Activated CD4-positive, alpha-beta T cell treated with anti-CD3 and anti-CD28 coated beads, Interleukin-2, amount 10 ng/mL, durations not matched to agents 7 days and 5 days (primary cell): ENCODE measurements at regions of chr10 and their contacts with region 1.

Region 1: DNA sequence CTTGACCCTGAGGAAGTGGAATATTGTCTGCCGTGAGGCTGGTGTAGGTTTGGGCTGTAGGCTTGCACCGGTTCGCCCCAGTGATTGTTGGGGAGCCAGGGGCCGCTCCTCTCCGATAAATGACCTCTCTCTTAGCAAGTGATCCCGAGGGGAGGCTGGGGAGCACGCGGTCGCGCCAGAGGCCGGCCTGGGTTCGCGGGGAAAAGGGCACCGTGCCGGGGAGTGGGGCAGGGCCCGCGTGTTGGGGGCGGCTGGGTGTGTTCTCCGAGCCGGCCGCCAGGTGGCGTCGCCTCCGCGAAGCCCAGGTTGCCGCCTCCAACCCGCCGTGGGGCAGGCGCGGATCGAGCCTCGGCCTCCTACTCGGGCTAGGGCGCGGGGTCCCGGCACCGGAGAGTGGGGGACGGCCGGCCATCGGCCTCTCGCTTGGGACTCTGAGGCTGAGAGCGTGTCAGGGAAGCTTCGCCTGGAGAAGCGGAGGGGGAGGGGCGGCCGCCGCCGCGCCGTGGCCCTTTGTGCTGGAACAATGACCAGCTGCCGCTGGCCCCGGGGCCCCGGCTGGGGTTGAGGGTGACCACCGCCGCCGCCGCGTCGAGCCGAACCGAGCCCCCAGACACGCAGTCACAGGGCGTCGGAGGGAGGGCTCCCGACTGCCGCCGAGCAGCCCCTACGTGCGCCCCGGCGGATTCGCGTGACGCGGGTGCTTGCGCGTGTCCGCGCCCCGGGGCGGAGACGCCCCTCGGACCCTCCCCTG is 442 bp upstream of the LZTS2 start:
- DNase-seq: peak; percentile 73
- H3K4me3 Mint-ChIP-seq: peak overlapping the region; percentile 80
- H3K27ac Mint-ChIP-seq: peak overlapping the region; percentile 88
- H3K4me1 Mint-ChIP-seq: peaks cover 27% of the 10 kb centered on the region
- H3K27me3 Mint-ChIP-seq: peaks cover 2% of the 10 kb centered on the region

Region 2: GRCh38 chr10:100986952-100987750 is 12.0 kb before region 1 on chr10 and contains the starts of genes MRPL43 and TWNK:
- CTCF ChIA-PET with region 1: interaction called, 14 read pairs
- POLR2A ChIA-PET with region 1: no interaction called
- DNase-seq: peak; percentile 90
- H3K4me3 Mint-ChIP-seq: peak within 1 kb of the TSS; percentile 89
- H3K27ac Mint-ChIP-seq: peak within 1 kb of the TSS; percentile 83
- H3K4me1 Mint-ChIP-seq: peaks cover 42% of the 10 kb centered on the region
- H3K27me3 Mint-ChIP-seq: no peaks in the 10 kb centered on the region
- total RNA-seq, gene MRPL43: 55.9 to 57.0 TPM
- total RNA-seq, gene TWNK: 9.9 to 11.6 TPM

Region 3: DNA sequence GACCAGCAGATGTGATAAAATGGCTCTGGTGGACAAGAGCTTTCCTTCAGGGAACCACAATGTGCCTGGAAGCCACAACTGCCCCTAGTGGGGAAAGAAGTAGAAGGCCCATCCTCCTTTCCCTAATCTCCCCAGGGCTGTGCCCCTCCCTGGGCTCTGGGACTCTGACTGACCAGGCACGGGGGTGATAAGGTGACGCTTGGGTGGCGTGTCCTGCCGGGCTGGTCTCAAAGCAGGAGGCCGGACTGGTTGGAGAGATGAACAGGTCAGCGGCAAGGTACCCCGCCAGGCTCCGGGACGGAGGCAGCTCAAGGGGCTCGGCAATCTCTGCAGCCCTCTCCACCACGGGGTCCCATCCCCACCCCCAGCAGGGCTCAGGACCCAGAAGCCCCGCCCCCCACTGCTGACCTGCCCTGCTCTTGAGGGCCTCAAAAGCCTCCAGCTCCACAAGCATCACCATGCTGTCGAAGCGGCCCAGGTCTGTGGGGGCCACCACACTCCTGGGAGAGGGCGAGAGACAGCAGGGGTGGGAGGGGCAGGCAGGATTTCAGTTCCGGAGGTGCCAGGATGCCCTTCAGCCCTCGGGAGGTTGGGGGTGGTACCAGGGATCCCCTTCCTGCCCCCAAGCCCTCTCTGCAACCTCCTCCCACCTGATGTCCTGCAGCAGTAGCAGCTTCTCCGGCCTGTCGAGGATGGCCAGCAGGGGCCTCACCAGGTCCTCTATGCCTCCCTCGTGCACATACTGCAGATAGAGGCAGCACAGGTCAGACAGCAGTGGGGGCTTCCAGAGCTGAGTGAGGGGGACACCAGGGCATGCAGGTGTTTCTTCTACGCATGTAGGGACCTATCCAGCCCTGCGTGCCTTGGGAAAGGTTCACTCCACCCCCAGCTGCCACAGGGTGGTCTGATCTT is 12.6 kb after region 1 on chr10:
- CTCF ChIA-PET with region 1: interaction called, 111 read pairs
- POLR2A ChIA-PET with region 1: no interaction called
- DNase-seq: no peak
- H3K4me3 Mint-ChIP-seq: no peak overlapping the region
- H3K27ac Mint-ChIP-seq: no peak overlapping the region
- H3K4me1 Mint-ChIP-seq: peaks cover 18% of the 10 kb centered on the region
- H3K27me3 Mint-ChIP-seq: peaks cover 13% of the 10 kb centered on the region

Region 4: DNA sequence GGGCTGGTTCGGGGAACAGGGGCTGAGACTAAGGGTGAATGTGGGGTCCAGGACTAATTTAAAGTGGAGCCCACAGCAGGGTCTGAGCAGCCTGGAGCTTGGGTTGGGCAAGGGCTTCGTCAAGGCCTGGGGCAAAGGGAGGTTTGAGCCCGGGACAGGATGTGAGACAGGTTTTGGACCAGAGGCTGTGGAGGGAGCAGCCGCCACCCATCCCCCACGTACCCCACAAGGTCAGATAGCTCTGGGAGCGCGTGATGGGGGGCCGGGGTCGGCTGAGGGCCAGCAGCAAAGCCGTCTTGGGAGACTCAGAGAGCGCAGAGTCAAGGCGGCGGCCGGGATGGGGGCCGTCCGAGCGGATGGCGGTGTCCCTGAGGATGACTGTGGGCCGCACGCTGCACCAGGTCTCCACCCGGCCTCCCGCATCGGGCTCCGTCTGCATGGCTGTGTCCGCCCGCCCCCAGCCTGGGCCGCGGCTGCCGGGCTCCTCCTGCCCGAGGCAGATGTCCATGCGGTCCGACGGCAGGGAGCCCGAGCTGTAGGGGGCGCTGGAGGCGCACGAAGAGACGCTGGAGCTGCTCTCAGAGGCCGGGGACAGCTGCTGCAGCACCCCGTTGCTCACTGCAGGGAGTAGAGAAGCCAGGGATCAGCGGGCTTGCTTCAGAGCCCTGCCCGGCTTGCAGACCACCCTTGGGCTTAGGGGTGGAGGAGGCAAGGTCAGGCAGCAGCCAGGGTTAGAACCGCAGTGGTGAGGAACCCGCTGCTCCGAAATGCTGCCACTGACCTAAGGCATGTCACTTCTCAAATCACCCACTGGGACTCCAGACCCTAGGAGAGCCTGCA is 19.7 kb after region 1 on chr10:
- CTCF ChIA-PET with region 1: interaction called, 111 read pairs
- POLR2A ChIA-PET with region 1: no interaction called
- DNase-seq: peak; percentile 76
- H3K4me3 Mint-ChIP-seq: no peak overlapping the region
- H3K27ac Mint-ChIP-seq: no peak overlapping the region
- H3K4me1 Mint-ChIP-seq: peaks cover 11% of the 10 kb centered on the region
- H3K27me3 Mint-ChIP-seq: peaks cover 38% of the 10 kb centered on the region